ENCODE measurements at regions of chr18 and their contacts with region 1.

Region 1: DNA sequence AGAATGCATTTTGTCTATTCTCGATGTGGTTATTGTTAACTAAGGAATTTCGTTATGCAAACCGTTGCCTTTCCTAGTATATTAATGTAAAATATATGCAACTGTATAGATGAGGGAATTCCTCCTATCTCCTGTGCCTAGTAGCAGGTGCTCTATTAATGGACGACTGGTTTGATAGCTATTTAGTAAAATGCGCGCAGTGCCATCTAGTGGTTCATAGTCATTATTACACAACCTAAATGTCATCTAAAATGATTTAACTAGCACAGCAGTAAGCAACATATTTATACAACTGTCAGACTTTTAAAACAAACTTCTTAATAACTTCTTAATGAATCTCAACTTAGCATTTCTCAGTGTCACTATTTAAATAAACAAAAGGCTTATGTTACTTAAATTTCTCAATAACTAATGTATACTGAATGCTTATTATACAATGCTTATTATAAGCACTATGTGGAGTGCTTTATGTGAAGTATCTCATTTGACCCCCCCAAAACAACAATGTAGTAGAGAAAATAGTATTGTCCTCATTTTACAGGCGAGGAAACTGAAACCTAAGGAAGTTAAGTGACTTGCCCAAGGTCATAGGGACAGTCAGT is 77.9 kb downstream of the DTNA start:
- DNase-seq: peak in 2 of 5 donors; percentile 33 to 44
- H3K4me3 ChIP-seq: no peak overlapping the region
- H3K27ac ChIP-seq: no peak overlapping the region
- H3K4me1 ChIP-seq: no peaks in the 10 kb centered on the region
- H3K27me3 ChIP-seq: no peaks in the 10 kb centered on the region
- CTCF ChIP-seq: peak in 2 of 3 donors; percentile 64 to 73
- EP300 ChIP-seq: no peak
- POLR2A ChIP-seq: no peak

Region 2: DNA sequence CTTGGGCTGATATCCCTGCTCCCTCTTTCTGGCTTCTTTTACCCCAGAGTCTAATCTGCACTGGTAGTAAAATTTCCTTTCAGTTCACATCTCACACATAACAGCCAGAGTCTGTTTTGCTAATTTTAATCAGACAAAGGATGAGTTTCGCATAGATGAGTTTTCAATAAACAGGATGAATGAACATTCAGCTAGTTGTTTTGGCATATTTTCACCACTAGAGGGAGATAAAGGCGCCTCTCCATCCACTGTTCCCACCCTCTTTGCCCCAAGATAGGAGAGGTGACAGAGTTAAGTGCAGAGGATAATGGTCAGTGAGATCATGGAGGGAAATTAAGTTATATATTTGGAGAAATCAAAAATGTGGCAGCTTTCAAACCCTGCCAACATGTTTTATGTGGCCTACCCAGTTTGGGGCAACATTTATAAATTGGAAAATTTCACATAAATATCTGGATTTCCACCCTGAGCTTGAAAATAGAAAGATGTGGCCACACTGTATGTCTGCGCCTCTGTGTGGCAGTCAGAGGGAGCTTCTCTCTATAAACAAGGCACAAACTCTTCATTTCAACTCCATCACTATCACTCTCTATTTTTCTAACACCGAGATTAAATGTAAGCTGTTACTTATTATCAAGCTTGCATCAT is 126.4 kb before region 1 on chr18:
- intact Hi-C with region 1: loop called in 2 of 4 experiments (anchors 5 kb)
- DNase-seq: no peak
- H3K4me3 ChIP-seq: no peak overlapping the region
- H3K27ac ChIP-seq: no peak overlapping the region
- H3K4me1 ChIP-seq: peaks cover 3% of the 10 kb centered on the region
- H3K27me3 ChIP-seq: no peaks in the 10 kb centered on the region
- CTCF ChIP-seq: peak; percentile 29 to 57 (median 37)
- EP300 ChIP-seq: no peak
- POLR2A ChIP-seq: no peak

Region 3: DNA sequence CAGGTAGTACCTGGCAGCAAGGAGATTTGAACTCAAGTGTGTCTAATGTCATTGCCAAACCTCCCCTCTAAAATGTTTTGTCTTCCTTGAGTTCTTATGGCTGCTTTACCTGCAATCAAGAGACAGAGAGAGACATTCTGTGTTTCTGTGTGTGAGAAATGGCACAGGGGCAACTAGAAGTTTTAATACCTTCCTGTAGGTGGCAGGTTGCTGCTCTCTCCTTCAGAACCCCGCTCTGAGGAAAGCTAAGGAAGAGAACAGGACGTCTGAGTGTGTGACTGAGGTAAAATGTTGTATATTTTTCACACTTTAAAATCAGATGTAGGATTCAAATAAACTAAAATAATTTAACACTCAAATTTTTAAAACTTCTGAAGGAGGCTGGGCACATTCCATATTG is 58.8 kb before region 1 on chr18:
- intact Hi-C with region 1: loop called in 1 of 4 experiments (anchors 10 kb)
- DNase-seq: no peak
- H3K4me3 ChIP-seq: no peak overlapping the region
- H3K27ac ChIP-seq: no peak overlapping the region
- H3K4me1 ChIP-seq: peaks cover 3% of the 10 kb centered on the region
- H3K27me3 ChIP-seq: no peaks in the 10 kb centered on the region
- CTCF ChIP-seq: no peak
- EP300 ChIP-seq: no peak
- POLR2A ChIP-seq: no peak

Measured in ovary (tissue), 10 donors.